ENCODE measurements at regions of chr6 and their contacts with region 1.

Region 1: DNA sequence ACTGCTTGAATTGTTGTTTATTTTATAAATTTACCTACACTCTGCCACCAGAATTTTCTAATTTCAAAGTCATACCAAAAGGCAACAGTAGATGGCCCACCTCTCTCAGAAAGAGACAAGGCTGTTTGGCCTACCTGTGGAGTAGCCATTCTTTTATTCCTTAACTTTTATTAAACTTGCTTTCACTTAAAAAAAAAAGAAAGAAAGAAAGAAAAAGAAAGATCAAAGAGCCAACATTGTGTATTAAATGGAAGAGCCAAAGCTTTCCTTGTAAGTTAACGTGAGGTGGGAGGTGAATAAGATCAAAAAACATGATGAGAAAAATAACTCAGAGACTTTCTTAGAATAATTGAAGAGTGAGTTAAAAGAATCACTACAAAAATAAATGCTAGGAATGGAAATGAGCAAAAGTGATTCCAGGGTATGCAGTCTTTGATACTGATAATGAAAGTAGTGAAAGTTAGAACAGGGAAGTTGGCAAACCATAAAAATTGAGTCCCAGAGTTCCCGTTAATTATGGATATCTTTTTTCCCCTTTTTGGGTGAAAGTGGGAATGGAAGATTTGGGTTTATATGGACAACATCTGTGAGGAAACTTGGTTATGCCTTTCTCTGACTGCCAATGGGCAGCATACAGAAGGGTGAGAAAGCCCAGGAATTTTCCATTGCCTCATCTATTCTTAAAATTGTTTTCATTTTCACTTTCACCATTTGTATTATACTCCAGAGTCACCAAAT is 35.9 kb upstream of the MYB start:
- DNase-seq: no peak
- ATAC-seq: peak; percentile 63

Region 2: GRCh38 chr6:135423649-135424128 is 278.5 kb after region 1 on chr6:
- intact Hi-C with region 1: loop called (anchors 10 kb)
- DNase-seq: no peak
- ATAC-seq: peak; percentile 48

Region 3: DNA sequence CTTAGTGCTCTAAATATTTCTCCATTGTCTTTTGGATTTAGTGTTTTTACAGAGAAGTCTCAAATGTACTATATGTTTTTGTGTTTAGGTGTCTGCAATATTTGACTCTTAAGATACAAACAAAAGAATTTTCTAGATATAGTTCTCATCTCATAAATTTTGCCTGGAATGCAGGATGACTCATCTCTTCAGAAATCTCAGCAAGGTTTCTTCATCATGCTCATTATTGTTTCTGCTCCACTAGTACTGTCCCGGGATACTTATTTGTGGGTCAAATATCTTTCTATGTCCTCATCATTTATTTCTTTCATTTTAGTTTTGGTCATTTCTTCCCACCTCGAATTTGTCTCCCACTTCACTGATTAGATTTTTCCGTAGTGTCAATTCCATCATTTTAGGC is 342.8 kb after region 1 on chr6:
- intact Hi-C with region 1: no loop called
- DNase-seq: no peak
- ATAC-seq: no peak

Measured in Right ventricle myocardium superior (tissue), 1 donor.